Ascending aorta (tissue), 2 donors: ENCODE measurements at regions of chr1 and their contacts with region 1.

Region 1: GRCh38 chr1:31593770-31594632 is 17.7 kb downstream of the TINAGL1 start:
- DNase-seq: peak in 1 of 2 donors; percentile 87
- H3K4me3 ChIP-seq: no peak overlapping the region
- H3K27ac ChIP-seq: no peak overlapping the region
- H3K4me1 ChIP-seq: peaks cover 5 to 18% of the 10 kb centered on the region in 2 donors
- H3K27me3 ChIP-seq: no peaks in the 10 kb centered on the region
- CTCF ChIP-seq: peak; percentile 75 to 79 (median 78)

Region 2: DNA sequence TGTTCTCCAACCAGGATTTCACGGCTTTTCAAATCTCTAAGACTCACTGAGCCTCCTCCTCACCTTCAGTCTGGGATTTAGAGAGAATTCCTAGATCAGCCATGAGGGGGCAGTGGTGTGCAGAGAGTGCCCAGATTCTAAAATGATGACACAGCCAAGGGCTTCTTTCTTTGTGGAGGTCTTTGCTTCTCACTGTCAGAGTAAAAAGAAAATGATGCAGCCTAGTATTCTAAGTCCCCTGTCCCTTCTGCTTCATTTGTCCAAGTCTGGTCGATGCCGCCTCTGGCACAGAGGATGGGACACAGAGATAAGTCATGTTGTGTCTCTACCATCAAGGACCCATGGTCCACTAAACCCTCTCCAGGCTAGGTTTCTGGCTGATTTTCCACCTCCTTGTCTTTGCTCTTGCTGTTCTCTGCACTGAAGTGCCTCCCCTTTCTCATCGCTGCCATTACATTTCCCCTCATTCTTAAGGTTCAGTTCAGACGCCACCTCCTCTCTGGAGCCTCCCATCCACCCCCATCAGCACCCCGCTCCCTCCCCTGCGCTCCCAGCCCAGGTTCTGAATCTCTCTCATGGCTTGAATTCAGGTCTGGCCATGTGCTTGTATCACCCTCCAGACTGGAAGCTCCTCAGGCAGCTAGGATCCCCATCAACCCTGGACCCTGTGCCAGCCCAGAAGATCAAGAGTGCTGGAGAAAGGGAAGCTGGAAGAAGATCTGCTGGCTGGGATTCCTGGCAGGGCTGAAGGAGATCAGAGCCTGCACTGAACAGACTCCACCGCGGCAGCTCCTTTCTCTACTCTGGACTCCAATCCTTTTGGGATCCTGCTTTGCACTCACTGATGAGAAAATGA is 29.6 kb before region 1 on chr1:
- intact Hi-C with region 1: loop called (anchors 1 kb)
- DNase-seq: peak in 1 of 2 donors; percentile 81
- H3K4me3 ChIP-seq: no peak overlapping the region
- H3K27ac ChIP-seq: peak overlapping the region; percentile 2 to 58
- H3K4me1 ChIP-seq: peaks cover 0 to 32% of the 10 kb centered on the region in 2 donors
- H3K27me3 ChIP-seq: no peaks in the 10 kb centered on the region
- CTCF ChIP-seq: peak; percentile 79 to 92 (median 90)

Region 3: DNA sequence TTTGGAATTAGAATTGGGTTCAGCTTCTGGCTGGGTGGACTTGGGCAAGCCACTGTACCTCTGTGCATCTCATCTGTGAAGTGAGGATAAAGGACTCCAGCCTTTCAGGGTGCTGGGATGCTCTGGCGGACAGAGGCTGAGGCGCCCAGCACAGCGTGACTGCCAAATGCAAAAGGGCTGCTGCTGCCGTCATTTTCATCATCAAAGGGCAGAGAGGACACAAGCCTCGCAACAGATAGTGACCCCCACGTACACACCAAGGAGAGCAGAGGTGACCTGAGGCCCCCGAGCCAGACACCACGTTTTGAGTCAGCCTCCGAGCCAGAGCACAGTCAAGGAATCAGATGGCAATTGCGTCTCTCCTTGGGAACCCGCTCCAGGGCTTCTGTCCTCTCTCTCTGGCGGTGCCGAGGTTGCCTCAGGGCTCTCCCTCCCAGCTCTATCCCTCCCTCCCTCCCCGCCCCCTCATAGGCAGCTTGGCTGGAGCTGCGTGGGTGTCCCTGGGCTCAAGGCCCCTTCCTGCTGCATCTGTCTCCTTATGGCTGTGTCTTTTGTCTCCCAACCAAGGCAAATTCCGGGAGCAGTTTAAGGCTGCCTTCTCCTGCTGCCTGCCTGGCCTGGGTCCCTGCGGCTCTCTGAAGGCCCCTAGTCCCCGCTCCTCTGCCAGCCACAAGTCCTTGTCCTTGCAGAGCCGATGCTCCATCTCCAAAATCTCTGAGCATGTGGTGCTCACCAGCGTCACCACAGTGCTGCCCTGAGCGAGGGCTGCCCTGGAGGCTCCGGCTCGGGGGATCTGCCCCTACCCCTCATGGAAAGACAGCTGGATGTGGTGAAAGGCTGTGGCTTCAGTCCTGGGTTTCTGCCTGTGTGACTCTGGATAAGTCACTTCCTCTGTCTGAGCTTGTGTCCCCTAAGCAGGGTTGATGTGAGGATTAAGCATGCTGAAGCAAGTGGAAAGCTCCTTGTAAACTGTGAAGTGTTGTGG is 32.5 kb after region 1 on chr1:
- intact Hi-C with region 1: loop called (anchors 5 kb)
- DNase-seq: no peak
- H3K4me3 ChIP-seq: no peak overlapping the region
- H3K27ac ChIP-seq: peak overlapping the region; percentile 90 to 91
- H3K4me1 ChIP-seq: peaks cover 25 to 48% of the 10 kb centered on the region in 2 donors
- H3K27me3 ChIP-seq: no peaks in the 10 kb centered on the region
- CTCF ChIP-seq: no peak